Dorsolateral prefrontal cortex (tissue), 120 donors: ENCODE measurements at regions of chr19 and their contacts with region 1.

Region 1: DNA sequence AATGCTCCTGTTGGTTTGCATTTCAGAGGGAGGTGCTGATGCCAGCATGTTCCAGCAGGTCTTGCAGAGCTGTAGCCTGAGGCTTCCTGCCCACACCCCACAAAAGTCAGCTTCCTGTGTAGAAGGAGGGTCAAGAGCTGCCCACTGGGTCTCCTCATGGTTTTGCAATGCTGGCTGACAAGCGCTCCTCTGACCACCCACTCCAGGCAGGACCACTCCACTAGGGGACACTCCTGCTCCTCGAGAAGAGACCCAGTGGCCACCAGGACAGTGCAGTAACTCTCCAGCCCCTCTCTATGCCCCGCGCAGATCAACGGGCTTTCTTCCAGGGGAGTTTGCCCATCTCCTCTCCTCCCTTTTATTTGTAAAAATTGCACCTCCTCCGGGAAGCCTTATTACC is 72.9 kb upstream of the UQCRFS1 start:
- DNase-seq: peak in 6 of 10 donors; percentile 43 to 71 (median 50)
- H3K4me3 ChIP-seq: no peak overlapping the region
- H3K27ac ChIP-seq: no peak overlapping the region
- H3K27me3 ChIP-seq: peaks cover 0 to 8% (median 0%) of the 10 kb centered on the region in 45 donors
- CTCF ChIP-seq: peak in 51 of 56 donors; percentile 9 to 70 (median 42)

Region 2: DNA sequence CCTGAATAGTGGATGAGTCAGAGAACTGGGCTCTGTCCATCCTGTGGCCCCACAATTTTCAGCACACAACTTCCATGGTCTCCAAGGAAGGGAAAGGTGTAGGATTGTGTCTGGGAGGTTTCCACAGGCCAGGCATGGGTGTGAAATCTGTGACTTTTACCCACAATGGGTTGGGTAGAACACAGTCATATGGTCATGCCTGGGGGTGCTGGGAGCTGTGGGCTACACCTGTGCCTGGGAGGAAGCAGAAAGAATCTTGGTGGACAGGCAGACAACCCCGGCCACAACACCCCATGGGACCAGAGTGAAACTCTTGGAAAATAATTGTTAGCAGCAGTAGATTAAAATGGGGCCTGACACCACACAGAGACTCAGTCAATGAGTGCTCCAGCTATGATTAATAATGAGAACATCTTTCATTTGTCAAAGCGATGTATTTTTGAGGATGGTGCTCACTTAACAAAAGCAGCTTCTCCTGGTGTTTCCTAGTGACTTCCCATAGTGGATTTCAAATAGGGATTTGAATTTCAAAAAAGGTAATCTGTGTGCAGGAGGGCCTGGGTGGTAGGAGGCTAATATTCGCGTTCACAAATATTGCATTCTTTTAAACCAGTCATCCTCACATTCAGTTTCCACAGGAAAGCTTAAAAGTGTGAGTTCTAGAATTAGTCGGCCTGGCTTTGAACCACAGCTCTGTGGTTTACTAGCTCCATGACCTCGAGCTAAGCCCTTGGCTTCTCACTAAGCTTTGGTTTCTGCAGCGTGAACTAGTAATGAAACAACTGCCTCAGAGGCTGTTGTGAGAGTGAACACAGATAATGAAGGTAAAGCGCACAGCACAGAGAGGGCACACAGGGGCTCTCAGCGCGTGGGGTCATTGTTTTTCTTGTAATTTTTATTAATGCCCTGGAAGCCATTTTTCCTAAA is 16.4 kb after region 1 on chr19:
- intact Hi-C with region 1: no loop called
- DNase-seq: no peak
- H3K4me3 ChIP-seq: no peak overlapping the region
- H3K27ac ChIP-seq: no peak overlapping the region
- H3K27me3 ChIP-seq: peaks cover 0 to 17% (median 0%) of the 10 kb centered on the region in 45 donors
- CTCF ChIP-seq: no peak

Region 3: DNA sequence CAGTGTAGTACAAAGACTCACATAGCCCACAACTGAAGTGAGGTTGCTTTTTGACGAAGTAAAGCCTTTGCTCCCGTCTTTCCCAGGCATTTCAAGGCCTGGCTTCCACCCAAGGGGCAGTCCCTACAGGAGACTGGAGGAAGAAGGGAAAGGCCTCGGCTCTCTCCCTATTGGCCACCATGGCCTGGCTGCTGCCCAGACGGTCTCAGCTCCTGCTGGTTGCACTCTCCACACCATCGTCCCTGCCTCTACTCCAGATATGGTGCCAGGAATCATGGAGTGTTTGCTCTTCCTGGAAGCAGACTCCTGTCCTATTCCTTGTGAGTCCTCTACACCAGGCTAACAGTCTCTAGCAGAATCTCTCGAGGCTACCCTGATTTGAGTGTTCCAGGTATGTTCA is 51.2 kb after region 1 on chr19:
- intact Hi-C with region 1: no loop called
- DNase-seq: no peak
- H3K4me3 ChIP-seq: no peak overlapping the region
- H3K27ac ChIP-seq: no peak overlapping the region
- H3K27me3 ChIP-seq: peaks cover 0 to 4% (median 0%) of the 10 kb centered on the region in 45 donors
- CTCF ChIP-seq: no peak

Region 4: DNA sequence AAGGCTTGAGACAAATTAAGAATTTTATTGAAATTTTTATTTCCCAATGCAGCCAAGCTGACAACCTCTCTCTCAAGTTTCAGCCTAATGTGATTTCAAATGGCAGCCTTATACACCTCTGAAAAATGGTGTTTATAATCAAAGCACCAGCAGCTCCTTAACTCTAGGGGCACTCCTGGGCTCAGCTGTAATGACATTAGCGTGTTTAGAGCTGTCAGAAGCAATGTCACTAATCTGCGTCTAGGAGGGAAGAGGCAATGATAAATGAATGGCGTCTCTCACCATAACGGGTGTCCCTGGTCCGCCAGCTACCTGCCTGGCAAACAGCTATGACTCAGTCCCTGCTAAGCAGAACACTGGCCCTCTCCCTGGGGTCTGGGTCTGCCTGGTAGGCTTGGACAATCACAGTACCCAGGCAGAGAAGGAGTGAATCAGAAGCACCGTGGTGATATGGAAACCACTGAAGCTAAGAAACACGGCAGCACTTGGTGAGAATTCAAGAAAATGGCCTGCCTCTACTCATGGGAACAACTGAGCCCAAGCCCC is 108.1 kb after region 1 on chr19:
- intact Hi-C with region 1: no loop called
- DNase-seq: no peak
- H3K4me3 ChIP-seq: no peak overlapping the region
- H3K27ac ChIP-seq: no peak overlapping the region
- H3K27me3 ChIP-seq: no peaks in the 10 kb centered on the region
- CTCF ChIP-seq: no peak

Region 5: DNA sequence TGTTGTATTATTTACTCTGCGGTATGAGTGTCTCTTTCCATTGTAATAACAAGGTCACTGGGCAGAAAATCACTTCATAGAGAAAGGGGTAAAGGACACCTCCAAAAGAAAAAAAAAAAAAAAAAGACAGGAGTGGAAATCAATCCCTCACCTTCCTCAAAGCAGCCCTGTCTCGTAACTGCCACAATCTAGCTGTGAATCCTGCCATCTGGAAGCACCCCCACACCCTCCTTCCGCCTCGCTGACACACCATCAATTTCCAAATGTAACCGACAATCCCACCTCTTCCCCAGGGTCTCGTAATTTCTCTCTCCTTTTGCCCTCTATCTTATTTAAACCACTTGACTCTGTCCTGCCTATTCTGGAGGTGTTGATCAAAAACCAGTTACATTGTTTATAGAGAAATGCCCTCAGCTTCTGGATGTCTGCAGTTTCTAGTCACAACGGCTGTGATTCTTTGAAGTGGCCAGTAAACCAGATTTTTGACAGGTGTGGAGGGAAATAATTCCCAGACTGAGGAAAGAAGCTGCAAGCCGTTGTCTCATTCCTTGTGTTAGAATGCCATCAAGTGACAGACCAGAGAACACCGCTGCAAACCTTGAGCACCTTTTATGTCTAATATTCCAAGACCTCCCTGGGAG is 311.1 kb after region 1 on chr19:
- intact Hi-C with region 1: loop called in 1 of 2 experiments (anchors 10 kb)
- DNase-seq: peak in 3 of 10 donors; percentile 17 to 43 (median 30)
- H3K4me3 ChIP-seq: no peak overlapping the region
- H3K27ac ChIP-seq: no peak overlapping the region
- H3K27me3 ChIP-seq: peaks cover 0 to 23% (median 0%) of the 10 kb centered on the region in 45 donors
- CTCF ChIP-seq: peak in 48 of 56 donors; percentile 8 to 61 (median 38)